Endothelial cell of umbilical vein (primary cell): ENCODE measurements at regions of chr2 and their contacts with region 1.

Region 1: DNA sequence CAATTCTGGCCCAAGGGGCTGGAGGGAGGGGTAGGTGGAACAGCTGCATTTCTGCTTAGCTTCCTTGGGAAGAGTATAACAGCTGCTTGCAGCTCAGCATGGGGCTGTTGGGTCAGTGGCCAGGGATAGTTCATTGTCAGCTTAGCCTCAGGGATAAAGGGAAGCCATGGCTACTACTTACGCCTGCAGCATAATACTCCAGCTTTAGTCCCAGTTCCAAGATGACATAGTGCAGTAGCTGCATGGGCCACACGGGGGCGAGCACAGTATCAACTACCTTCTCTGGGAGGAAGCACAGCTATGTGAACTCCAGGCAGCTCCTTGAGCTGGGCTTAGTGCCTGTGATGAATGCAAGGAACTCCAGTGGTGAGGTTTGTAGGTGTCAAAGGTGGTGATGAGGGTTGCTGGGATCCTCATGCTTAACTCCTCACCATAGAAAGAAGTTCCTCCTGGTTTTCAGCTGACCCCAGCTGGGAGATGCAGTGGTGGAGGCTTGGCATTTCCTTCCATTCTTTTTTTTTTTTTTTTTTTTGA is 35.4 kb upstream of the RHOB start:
- DNase-seq: peak; percentile 83
- H3K4me3 ChIP-seq: no peak overlapping the region
- H3K27ac ChIP-seq: no peak overlapping the region
- H3K4me1 ChIP-seq: no peaks in the 10 kb centered on the region
- H3K27me3 ChIP-seq: peaks cover 9 to 12% of the 10 kb centered on the region in 2 experiments
- CTCF ChIP-seq: peak; percentile 88 to 90
- POLR2A ChIP-seq: no peak

Region 2: GRCh38 chr2:20212459-20212870 is 199.0 kb before region 1 on chr2:
- CTCF ChIA-PET with region 1: no interaction called
- POLR2A ChIA-PET with region 1: no interaction called
- dilution Hi-C with region 1: no loop called
- intact Hi-C with region 1: no loop called
- DNase-seq: peak; percentile 31
- H3K4me3 ChIP-seq: no peak overlapping the region
- H3K27ac ChIP-seq: no peak overlapping the region
- H3K4me1 ChIP-seq: peaks cover 6% of the 10 kb centered on the region
- H3K27me3 ChIP-seq: no peaks in the 10 kb centered on the region
- CTCF ChIP-seq: no peak
- POLR2A ChIP-seq: no peak

Region 3: GRCh38 chr2:20378792-20379519 is 32.5 kb before region 1 on chr2:
- CTCF ChIA-PET with region 1: interaction called, 28 read pairs
- POLR2A ChIA-PET with region 1: no interaction called
- dilution Hi-C with region 1: no loop called
- intact Hi-C with region 1: no loop called
- DNase-seq: peak; percentile 78
- H3K4me3 ChIP-seq: no peak overlapping the region
- H3K27ac ChIP-seq: no peak overlapping the region
- H3K4me1 ChIP-seq: no peaks in the 10 kb centered on the region
- H3K27me3 ChIP-seq: peaks cover 6 to 9% of the 10 kb centered on the region in 2 experiments
- CTCF ChIP-seq: peak; percentile 87 to 89
- POLR2A ChIP-seq: no peak

Region 4: DNA sequence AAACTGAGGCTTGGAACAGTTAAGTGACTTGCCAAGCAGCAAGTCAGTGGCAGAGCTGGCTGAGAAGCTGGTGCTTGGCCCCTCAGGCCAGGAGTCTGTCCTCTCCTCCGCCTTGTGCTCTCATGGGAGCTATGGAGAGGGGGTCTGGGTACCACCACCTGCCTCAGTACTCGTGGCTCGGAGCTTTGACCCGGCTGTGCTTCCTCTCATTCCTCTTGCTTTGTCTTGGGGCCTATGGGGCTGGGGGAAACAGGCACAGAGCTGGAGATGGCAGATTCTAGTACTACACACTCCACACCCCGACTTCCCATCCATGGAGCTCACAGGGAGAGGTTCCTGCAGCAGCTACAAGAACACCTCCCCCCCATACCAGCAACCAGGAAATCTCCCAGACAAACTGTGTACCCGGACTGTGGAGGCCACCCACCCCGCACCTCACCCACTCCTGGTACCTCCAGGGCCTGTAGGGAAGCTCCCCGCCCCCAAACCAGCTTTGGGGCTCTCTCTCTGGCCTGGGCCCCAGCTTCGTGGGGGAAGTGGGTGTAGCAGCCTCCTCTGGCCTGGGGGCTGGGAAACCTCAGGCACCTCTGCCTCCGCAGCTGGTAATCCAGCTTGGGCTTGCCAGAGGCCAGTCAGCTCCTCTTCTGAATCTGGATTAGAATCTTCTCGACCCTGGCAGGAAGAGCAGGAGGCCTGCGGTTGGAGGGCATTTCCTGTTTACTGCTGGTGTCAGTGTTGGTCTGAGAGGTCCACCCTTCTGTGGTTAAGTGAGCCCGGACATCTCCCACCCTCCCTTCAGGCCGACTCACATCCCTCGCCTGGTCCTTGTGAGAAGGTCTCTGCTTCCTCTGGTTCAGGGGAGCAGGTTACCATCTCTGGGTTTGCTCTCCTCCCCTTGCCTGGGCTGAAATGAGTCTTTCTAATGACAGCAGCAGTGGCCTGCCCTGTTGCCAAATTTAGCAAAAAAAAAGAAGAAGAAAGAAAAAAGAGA is 13.2 kb after region 1 on chr2:
- CTCF ChIA-PET with region 1: interaction called, 122 read pairs
- POLR2A ChIA-PET with region 1: no interaction called
- dilution Hi-C with region 1: no loop called
- intact Hi-C with region 1: no loop called
- DNase-seq: peak; percentile 51
- H3K4me3 ChIP-seq: no peak overlapping the region
- H3K27ac ChIP-seq: no peak overlapping the region
- H3K4me1 ChIP-seq: peaks cover 12% of the 10 kb centered on the region
- H3K27me3 ChIP-seq: no peaks in the 10 kb centered on the region
- CTCF ChIP-seq: no peak
- POLR2A ChIP-seq: no peak

Region 5: GRCh38 chr2:20438334-20439192 is 27.1 kb after region 1 on chr2:
- CTCF ChIA-PET with region 1: interaction called, 150 read pairs
- POLR2A ChIA-PET with region 1: no interaction called
- dilution Hi-C with region 1: no loop called
- intact Hi-C with region 1: loop called (anchors 1 kb)
- DNase-seq: peak; percentile 66
- H3K4me3 ChIP-seq: peak overlapping the region in 1 of 3 experiments; percentile 30
- H3K27ac ChIP-seq: peak overlapping the region; percentile 54
- H3K4me1 ChIP-seq: peaks cover 17% of the 10 kb centered on the region
- H3K27me3 ChIP-seq: no peaks in the 10 kb centered on the region
- CTCF ChIP-seq: no peak
- POLR2A ChIP-seq: no peak

Region 6: DNA sequence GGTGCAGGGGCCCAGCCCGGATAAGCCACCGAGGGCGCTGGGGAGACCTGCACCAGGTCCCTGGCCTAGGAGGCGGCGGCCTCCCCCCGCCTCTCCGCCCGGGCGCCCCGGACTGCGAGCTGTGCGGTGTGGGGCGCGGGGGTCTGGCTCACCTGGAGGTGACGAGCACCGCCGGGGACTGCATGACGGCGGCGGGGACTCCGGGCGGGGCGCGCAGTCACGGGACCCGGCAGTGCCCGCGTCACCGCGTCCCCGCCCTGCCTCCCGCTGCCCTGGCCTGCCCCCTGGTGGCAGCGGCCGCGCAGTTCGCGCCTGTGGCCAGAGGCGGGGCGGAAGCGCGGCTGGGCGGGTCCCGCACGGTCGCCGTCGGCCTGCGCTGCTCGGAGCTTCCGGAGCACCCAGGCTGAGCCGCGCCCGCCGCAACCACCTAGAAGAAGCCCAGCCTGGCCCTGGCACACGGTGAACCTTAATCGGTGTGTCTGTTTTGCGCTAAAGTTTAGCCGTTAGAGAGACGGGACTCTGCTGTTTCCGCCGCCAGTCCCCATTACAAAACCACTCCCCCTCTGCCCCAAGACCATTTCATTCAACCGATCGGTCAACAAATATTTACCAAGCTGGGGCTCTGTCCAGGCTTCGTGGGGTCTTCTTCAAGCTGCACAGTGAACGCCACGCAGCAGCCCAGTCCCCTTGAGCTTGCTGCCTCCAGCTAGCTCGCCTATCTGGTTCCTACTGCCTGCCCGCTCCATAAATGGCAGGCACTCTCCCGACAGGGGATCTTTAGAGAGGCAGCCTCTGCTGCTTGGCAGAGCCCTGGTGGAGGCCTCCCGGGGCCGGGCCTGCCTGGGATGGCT is 239.7 kb after region 1 on chr2 and contains the start of gene HS1BP3:
- CTCF ChIA-PET with region 1: interaction called, 22 read pairs
- POLR2A ChIA-PET with region 1: no interaction called
- dilution Hi-C with region 1: no loop called
- intact Hi-C with region 1: no loop called
- DNase-seq: peak; percentile 77
- H3K4me3 ChIP-seq: peak within 1 kb of the TSS; percentile 50 to 95 (median 75)
- H3K27ac ChIP-seq: peak within 1 kb of the TSS; percentile 64
- H3K4me1 ChIP-seq: peaks cover 10% of the 10 kb centered on the region
- H3K27me3 ChIP-seq: peaks cover 9 to 10% of the 10 kb centered on the region in 2 experiments
- CTCF ChIP-seq: peak; percentile 73 to 96
- POLR2A ChIP-seq: peak; percentile 87
- total RNA-seq, gene HS1BP3: 27.8 and 33.1 TPM in 2 replicates